ENCODE measurements at regions of chr4 and their contacts with region 1.

Region 1: DNA sequence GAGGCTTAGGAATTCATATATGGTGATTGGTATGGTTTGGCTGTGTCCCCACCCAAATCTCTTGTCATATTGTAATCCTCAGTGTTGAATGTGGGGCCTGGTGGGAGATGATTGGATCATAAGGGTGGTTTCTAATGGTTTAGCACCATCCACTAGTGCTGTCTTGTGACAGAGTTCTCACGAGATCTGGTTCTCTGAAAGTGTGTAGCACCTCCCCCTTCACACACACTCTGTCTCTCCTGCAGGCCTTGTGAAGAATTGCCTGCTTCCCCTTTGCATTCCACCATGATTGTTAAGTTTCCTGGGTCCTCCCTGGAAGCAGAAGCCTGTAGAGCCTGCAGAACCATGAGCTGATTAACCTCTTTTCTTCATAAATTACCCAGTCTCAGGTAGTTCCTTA is 135.8 kb upstream of the FAT1 start:
- DNase-seq: no peak
- H3K4me3 ChIP-seq: no peak overlapping the region
- CTCF ChIP-seq: no peak

Region 2: GRCh38 chr4:186792728-186793366 is 66.6 kb before region 1 on chr4:
- in situ Hi-C with region 1: loop called (anchors 5 kb)
- DNase-seq: no peak
- H3K4me3 ChIP-seq: no peak overlapping the region
- CTCF ChIP-seq: no peak

Region 3: DNA sequence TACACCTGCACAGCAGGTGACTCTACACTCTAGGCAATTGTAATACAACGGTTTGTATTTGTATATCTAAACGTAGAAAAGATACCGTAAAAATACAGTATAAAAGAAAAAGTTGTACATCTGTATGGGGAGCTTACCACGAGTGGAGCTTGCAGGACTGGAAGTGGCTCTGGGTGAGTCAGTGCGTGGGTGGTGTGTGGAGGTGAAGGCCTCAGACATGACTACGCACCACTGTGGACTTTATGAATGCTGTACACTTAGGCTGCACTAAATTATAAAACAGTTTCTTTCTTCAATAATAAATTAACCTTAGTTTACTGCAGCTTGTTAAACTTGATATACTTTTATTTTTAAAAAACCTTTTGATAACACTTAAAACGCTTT is 50.8 kb before region 1 on chr4:
- in situ Hi-C with region 1: no loop called
- DNase-seq: no peak
- H3K4me3 ChIP-seq: no peak overlapping the region
- CTCF ChIP-seq: no peak

Region 4: GRCh38 chr4:187227907-187228704 is 368.7 kb after region 1 on chr4:
- in situ Hi-C with region 1: no loop called
- DNase-seq: no peak
- H3K4me3 ChIP-seq: no peak overlapping the region
- CTCF ChIP-seq: no peak